ENCODE measurements at regions of chrX and their contacts with region 1.

Region 1: DNA sequence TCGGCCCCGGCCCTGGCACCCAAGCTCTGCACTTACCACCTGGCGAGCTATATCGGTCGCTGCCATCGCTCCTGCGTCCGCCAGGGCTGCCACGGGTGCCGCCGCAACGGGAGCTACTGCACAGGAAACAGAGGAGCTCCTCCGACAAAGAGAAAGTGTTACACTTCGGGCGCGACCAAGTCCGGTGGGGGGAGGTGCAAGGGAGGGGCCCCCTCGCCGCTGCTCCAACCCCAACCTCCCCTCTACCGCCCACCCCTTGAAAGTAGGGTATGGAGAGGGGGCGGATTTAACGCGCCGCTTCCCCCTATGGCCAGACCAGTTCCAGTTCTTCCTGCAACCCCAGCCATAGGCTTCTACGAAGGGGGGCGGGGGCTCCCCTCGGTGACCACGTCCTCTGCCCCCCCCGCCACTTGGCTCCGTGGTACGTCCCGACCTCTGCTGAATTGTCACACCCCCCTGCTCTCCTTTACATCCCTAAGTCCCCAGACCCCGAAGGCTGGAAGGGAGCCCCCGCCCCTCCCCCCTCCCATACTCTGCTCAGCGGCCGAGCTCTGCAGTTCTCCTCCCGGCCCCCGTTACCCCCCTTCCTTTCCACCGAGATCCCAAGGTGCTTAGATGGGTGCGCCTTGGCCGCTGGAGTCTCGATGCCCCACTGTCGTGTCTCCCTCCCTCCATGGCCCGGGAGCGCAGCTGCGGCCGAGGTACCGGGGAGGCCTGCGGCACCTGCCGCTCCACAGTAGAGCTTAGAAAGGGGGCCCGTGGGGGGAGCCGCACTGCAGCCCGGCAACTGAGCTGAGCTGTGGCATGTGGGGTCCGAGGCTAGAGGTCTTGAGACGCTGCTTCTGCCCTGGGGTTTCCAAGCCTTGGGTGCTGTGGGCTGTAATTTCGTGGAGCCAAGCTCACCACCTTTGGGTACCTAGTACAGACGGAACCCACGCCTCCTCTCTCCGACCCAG is at the start of gene SEPTIN6:
- DNase-seq: peak; percentile 59
- ATAC-seq: peak; percentile 73
- H3K4me3 ChIP-seq: peak within 1 kb of the TSS; percentile 68 to 82 (median 77)
- H3K27ac ChIP-seq: peak within 1 kb of the TSS; percentile 60
- H3K4me1 ChIP-seq: peaks cover 14% of the 10 kb centered on the region
- H3K27me3 ChIP-seq: no peaks in the 10 kb centered on the region
- CTCF ChIP-seq: no peak
- EP300 ChIP-seq: no peak
- POLR2A ChIP-seq: peak; percentile 55 to 75
- RAD21 ChIP-seq: no peak
- total RNA-seq, gene SEPTIN6: 21.7 and 34.1 TPM in 2 replicates

Region 2: GRCh38 chrX:119194621-119195020 is 498.7 kb before region 1 on chrX:
- CTCF ChIA-PET with region 1: no interaction called
- POLR2A ChIA-PET with region 1: no interaction called
- in situ Hi-C with region 1: no loop called
- intact Hi-C with region 1: no loop called
- DNase-seq: no peak
- ATAC-seq: 0 out of 3 replicates have a peak, but pooled peaks have one; percentile 25
- H3K4me3 ChIP-seq: no peak overlapping the region
- H3K27ac ChIP-seq: no peak overlapping the region
- H3K4me1 ChIP-seq: no peaks in the 10 kb centered on the region
- H3K27me3 ChIP-seq: no peaks in the 10 kb centered on the region
- CTCF ChIP-seq: peak; percentile 32
- EP300 ChIP-seq: no peak
- POLR2A ChIP-seq: no peak
- RAD21 ChIP-seq: no peak

Region 3: GRCh38 chrX:119574394-119575266 is 118.7 kb before region 1 on chrX and contains the start of gene UBE2A:
- CTCF ChIA-PET with region 1: no interaction called
- POLR2A ChIA-PET with region 1: interaction called, 11 read pairs
- in situ Hi-C with region 1: no loop called
- intact Hi-C with region 1: no loop called
- DNase-seq: peak; percentile 69
- ATAC-seq: peak; percentile 92
- H3K4me3 ChIP-seq: peak within 1 kb of the TSS; percentile 78 to 85 (median 79)
- H3K27ac ChIP-seq: peak within 1 kb of the TSS; percentile 79
- H3K4me1 ChIP-seq: peaks cover 30% of the 10 kb centered on the region; the same call in 1 of the 2 replicates
- H3K27me3 ChIP-seq: no peaks in the 10 kb centered on the region
- CTCF ChIP-seq: 0 out of 2 replicates have a peak, but pooled peaks have one; percentile 26
- EP300 ChIP-seq: no peak
- POLR2A ChIP-seq: peak; percentile 95
- RAD21 ChIP-seq: no peak
- total RNA-seq, gene UBE2A: 17.0 and 22.0 TPM in 2 replicates

Measured in HepG2 (cell line).